ENCODE measurements at regions of chr13 and their contacts with region 1.

Region 1: GRCh38 chr13:46160471-46161066 is 21.4 kb downstream of the LCP1 start:
- DNase-seq: peak; percentile 39
- H3K4me3 Mint-ChIP-seq: peak overlapping the region; percentile 46
- H3K27ac Mint-ChIP-seq: peak overlapping the region; percentile 82
- H3K4me1 Mint-ChIP-seq: peaks cover 64% of the 10 kb centered on the region
- H3K27me3 Mint-ChIP-seq: no peaks in the 10 kb centered on the region

Region 2: DNA sequence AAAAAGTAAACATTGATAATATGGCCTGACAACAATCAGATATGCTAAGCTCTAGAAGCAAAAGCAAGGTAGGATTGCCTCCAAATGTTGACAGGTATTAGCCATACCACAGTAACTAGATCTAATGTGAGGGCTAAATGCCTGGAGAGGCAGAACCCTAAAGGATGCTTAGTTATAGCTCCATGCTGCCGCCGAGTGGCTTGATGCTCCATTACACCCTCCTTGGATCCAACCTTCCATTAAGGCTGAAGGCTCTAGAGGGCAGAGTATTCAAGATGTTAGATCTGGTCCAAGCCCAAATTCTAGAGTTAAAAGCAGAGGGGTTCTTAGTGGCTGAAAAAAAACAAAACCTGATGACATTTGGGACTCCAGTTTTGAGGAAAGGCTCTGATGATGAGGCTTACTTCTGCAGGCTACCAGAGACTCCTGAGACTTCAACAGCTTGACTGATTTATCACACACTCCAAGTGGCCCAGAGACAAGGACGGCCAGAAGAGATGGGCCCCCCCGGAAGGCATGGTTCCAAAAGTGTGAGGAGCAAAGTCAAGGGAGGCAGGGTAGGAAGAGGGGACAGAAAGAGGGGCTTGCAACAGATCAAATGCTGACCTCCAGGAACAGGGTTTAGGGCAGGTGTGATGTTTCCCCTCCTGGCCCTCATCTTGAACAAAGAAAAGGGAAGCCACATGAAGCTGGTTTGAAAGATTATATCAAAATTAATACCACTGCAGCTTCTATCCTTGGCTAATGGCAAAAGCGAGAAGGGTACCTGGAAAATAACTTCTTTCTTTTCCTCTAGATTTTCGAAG is 33.8 kb before region 1 on chr13:
- CTCF ChIA-PET with region 1: interaction called, 11 read pairs
- DNase-seq: peak; percentile 78
- H3K4me3 Mint-ChIP-seq: no peak overlapping the region
- H3K27ac Mint-ChIP-seq: peak overlapping the region; percentile 25
- H3K4me1 Mint-ChIP-seq: peaks cover 35% of the 10 kb centered on the region
- H3K27me3 Mint-ChIP-seq: peaks cover 7% of the 10 kb centered on the region

Region 3: DNA sequence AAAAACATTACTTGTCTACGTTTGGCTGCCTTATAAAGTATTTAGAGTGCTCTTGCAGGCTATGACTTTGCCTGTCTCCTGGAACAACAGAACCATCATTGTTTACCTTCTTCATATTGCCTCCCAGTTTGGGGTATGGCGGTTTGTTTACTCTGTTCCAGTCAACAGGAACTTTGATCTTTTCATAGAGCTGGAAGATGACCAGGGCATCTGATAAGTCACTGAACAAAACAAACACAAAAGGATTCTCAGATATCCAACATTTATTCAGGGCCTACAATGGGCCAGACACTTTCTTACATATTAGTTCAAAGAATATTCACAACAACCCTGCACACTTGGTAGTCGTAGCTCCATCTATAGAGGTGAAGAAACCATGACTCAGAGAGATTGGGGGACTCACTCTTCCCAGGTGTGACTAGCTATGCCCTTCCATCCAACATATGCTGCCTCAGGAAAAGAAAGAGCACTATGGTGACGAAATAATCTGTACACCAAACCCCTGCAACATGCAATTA is 17.3 kb before region 1 on chr13:
- CTCF ChIA-PET with region 1: interaction called, 17 read pairs
- DNase-seq: no peak
- H3K4me3 Mint-ChIP-seq: no peak overlapping the region
- H3K27ac Mint-ChIP-seq: no peak overlapping the region
- H3K4me1 Mint-ChIP-seq: peaks cover 10% of the 10 kb centered on the region
- H3K27me3 Mint-ChIP-seq: no peaks in the 10 kb centered on the region

Region 4: DNA sequence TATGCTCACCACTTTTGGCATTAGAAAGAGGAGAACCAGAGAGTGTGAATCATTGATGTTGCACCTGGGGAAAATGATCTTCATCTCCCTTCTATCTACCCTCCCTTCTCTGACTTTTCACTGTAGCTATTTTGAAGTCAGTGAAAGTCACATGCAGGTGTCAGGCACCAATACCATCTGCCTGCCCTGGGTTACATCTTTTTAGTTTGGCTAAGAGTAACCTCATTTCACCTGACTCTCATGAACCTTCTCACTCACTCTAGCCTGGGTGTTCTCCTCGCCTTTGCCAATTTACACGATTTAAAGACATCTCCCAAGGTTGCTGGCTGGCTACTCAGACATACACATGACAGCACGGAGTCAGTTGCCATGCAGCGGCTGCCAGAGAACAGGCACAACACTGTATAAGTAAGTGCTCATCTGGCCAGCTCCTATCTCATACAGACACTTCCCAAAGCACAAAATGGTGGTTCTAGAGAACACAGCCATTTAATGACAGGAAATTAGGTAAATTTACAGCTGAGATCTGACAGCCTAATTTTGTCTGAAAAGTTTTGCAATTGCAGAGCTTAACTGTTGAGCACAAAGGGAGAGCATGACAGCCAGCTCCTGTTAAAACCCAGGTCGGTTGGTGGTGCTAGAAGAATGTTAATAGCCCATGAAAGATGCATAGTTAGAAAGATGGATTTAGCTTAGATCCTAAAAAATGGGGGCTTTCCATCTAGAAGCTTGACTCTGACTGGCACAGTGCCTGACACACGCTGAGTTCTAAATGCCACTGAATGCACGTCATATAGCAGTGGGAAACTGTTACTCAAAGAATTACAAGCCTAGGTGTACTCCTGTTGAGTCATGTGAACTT is 11.1 kb before region 1 on chr13:
- CTCF ChIA-PET with region 1: interaction called, 17 read pairs
- DNase-seq: no peak
- H3K4me3 Mint-ChIP-seq: no peak overlapping the region
- H3K27ac Mint-ChIP-seq: peak overlapping the region; percentile 80
- H3K4me1 Mint-ChIP-seq: peaks cover 23% of the 10 kb centered on the region
- H3K27me3 Mint-ChIP-seq: no peaks in the 10 kb centered on the region

Region 5: GRCh38 chr13:46288570-46289259 is 128.1 kb after region 1 on chr13:
- CTCF ChIA-PET with region 1: interaction called, 12 read pairs
- DNase-seq: no peak
- H3K4me3 Mint-ChIP-seq: no peak overlapping the region
- H3K27ac Mint-ChIP-seq: no peak overlapping the region
- H3K4me1 Mint-ChIP-seq: peaks cover 16% of the 10 kb centered on the region
- H3K27me3 Mint-ChIP-seq: peaks cover 3% of the 10 kb centered on the region